Activated CD4-positive, alpha-beta T cell treated with anti-CD3 and anti-CD28 coated beads for 36 hours (primary cell): ENCODE measurements at regions of chr2 and their contacts with region 1.

Region 1: GRCh38 chr2:85728883-85729824 is 24.6 kb upstream of the ATOH8 start:
- DNase-seq: peak; percentile 87
- ATAC-seq: peak; percentile 94
- H3K4me3 Mint-ChIP-seq: no peak overlapping the region
- H3K27ac Mint-ChIP-seq: no peak overlapping the region
- H3K4me1 Mint-ChIP-seq: no peaks in the 10 kb centered on the region
- H3K27me3 Mint-ChIP-seq: peaks cover 7% of the 10 kb centered on the region

Region 2: DNA sequence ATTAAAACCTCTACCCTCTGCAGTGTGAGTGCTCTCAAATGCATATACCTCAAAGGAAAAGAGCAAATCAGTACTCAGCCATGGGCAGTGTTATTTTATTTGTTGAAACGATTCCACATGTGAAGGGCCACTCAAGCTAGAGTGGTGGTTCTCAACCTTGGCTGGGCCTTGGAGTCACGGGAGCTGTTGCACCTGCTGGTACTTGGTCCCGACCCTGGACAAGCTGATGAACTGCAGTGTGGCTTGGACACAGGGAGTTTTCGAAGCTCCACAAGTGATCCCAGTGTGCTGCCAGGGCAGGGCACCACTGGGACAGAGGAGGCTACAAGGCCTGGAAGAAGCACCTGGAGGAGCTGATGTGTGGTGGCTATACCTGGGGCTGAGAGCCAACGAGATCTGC is 15.3 kb before region 1 on chr2:
- CTCF ChIA-PET with region 1: interaction called, 11 read pairs
- POLR2A ChIA-PET with region 1: no interaction called
- intact Hi-C with region 1: no loop called
- DNase-seq: no peak
- ATAC-seq: no peak
- H3K4me3 Mint-ChIP-seq: no peak overlapping the region
- H3K27ac Mint-ChIP-seq: no peak overlapping the region
- H3K4me1 Mint-ChIP-seq: peaks cover 3% of the 10 kb centered on the region
- H3K27me3 Mint-ChIP-seq: no peaks in the 10 kb centered on the region

Region 3: GRCh38 chr2:85750587-85751575 is 21.7 kb after region 1 on chr2:
- CTCF ChIA-PET with region 1: interaction called, 19 read pairs
- POLR2A ChIA-PET with region 1: no interaction called
- intact Hi-C with region 1: no loop called
- DNase-seq: peak; percentile 77
- ATAC-seq: peak; percentile 66
- H3K4me3 Mint-ChIP-seq: no peak overlapping the region
- H3K27ac Mint-ChIP-seq: no peak overlapping the region
- H3K4me1 Mint-ChIP-seq: peaks cover 13% of the 10 kb centered on the region
- H3K27me3 Mint-ChIP-seq: peaks cover 45% of the 10 kb centered on the region

Region 4: DNA sequence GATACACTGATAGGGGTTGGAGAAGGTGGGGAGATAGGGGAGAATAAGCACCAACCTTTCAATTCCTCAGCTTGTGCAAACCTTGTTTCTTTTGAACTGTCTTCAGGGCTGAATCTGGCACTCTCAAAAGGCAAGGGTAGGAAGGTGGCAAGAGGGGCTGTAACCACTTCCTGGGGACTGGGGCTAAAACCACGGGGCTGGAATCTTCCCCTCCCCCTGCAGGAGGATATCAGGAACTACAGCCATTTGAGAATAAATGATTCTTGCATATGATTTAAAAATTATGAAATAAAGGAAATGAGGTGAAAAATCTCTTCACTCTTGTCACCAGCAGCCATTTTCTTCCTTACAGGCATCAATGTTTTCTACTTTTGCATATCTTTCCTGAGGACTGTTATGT is 75.4 kb after region 1 on chr2:
- CTCF ChIA-PET with region 1: interaction called, 6 read pairs
- POLR2A ChIA-PET with region 1: no interaction called
- intact Hi-C with region 1: loop called in 1 of 2 experiments (anchors 2 kb)
- DNase-seq: peak; percentile 46
- ATAC-seq: peak; percentile 63
- H3K4me3 Mint-ChIP-seq: no peak overlapping the region
- H3K27ac Mint-ChIP-seq: no peak overlapping the region
- H3K4me1 Mint-ChIP-seq: peaks cover 9% of the 10 kb centered on the region
- H3K27me3 Mint-ChIP-seq: no peaks in the 10 kb centered on the region

Region 5: GRCh38 chr2:85826990-85827878 is 98.1 kb after region 1 on chr2:
- CTCF ChIA-PET with region 1: interaction called, 12 read pairs
- POLR2A ChIA-PET with region 1: no interaction called
- intact Hi-C with region 1: no loop called
- DNase-seq: peak; percentile 90
- ATAC-seq: peak; percentile 93
- H3K4me3 Mint-ChIP-seq: no peak overlapping the region
- H3K27ac Mint-ChIP-seq: peak overlapping the region; percentile 10
- H3K4me1 Mint-ChIP-seq: peaks cover 15% of the 10 kb centered on the region
- H3K27me3 Mint-ChIP-seq: no peaks in the 10 kb centered on the region

Region 6: DNA sequence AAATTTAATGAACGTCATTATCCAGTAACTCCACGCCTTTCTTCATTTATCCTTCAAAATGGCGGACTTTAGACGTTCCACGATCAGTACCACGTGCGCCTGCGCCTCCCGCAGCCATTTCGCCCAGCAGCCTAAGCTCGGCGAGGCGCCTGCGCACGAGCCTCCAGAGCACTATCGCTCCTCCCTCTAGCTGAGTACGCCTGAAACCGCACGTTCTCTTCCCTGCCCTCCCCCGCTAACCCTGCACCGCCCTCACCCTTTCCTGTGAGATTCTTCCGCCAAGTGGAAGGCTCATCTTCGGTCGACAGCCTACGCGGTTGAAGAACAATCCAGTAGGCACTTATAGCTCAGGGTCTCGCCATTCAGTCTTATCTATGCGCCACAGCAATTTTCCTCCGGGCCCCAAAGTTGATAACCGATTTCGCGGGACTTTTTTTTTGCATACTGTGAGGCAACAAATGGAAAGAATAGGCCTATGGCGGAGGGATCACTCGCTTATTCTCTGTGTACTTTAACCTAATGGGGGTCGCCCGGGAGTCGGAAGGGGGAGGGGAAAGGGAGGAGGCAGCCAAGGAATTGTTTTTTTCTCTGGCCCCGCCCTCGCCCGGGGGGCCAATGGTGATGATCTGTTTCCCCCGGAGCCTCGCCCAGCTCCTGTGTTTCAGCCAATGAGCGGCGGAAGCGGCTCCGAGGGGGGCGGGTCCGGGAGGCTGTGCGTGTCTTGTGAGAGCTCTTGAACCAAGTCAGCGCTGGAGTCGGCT is 711.7 kb after region 1 on chr2 and contains the start of gene KDM3A:
- CTCF ChIA-PET with region 1: no interaction called
- POLR2A ChIA-PET with region 1: no interaction called
- intact Hi-C with region 1: no loop called
- DNase-seq: peak; percentile 100
- ATAC-seq: peak; percentile 88
- H3K4me3 Mint-ChIP-seq: peak within 1 kb of the TSS; percentile 90
- H3K27ac Mint-ChIP-seq: peak within 1 kb of the TSS; percentile 99
- H3K4me1 Mint-ChIP-seq: peaks cover 37% of the 10 kb centered on the region
- H3K27me3 Mint-ChIP-seq: no peaks in the 10 kb centered on the region
- total RNA-seq, gene KDM3A: 68.9 to 82.9 TPM